Testis (tissue), 5 donors: ENCODE measurements at regions of chr17 and their contacts with region 1.

Region 1: DNA sequence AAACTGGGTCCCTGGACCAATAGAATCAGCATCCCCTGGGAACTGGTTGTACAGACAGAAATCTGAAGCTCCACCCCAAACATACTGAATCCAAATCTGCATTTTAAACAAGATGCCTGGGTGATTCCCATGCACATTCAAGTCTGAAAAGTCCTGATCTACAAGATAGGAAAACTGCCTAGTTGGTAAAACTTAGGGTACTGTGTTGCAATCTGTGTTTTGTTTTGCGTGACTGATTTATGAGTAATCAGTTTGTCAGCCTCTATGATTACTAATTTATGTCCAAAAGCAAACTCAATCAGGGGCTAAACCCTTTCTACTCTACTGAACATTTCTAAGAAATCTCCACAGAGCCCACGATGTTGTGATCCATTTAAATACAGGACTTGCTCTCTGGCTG is 103.8 kb downstream of the YPEL2 start:
- DNase-seq: no peak
- H3K4me3 ChIP-seq: no peak overlapping the region
- H3K27ac ChIP-seq: no peak overlapping the region
- H3K4me1 ChIP-seq: peaks cover 8% of the 10 kb centered on the region
- H3K27me3 ChIP-seq: no peaks in the 10 kb centered on the region
- CTCF ChIP-seq: no peak
- POLR2A ChIP-seq: no peak

Region 2: DNA sequence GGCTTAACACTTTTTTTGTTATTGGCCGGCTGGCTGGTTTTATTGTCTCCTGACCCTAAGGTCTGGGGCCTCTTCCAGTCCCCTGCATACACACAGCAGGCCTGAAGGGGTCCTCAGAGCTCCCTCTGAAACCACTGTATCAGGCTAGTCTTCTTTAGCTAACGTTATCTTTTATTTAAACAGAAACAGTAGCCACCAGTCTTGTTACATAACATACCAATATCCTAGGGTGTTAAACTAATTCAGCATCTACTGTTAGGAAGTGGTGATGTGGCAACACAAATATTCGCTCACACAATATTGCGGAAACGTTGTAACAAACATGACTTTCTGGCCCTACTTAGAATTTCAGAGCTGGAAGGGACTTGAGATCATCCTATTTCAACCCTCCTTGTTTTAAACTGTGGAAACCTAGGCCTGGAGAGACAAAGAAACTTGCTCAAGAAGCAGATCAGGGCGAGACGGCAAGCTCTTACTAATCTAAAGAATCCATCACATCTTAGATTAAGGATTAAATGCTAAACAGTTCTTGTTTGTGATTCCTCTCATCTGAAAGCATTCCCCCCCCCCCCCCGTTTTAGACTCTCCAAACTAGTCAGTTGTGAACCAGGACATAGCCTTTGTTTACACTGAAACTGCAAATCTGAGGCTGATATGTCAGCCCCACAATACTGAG is 105.5 kb before region 1 on chr17:
- intact Hi-C with region 1: loop called (anchors 5 kb)
- DNase-seq: peak; percentile 79
- H3K4me3 ChIP-seq: no peak overlapping the region
- H3K27ac ChIP-seq: peak overlapping the region; percentile 84 to 93
- H3K4me1 ChIP-seq: peaks cover 41% of the 10 kb centered on the region
- H3K27me3 ChIP-seq: no peaks in the 10 kb centered on the region
- CTCF ChIP-seq: peak; percentile 70 to 81 (median 77)
- POLR2A ChIP-seq: no peak